ENCODE measurements at regions of chr15 and their contacts with region 1.

Region 1: GRCh38 chr15:64387562-64388168 is at the start of gene TRIP4:
- DNase-seq: peak; percentile 98 to 100
- ATAC-seq: peak; percentile 100
- H3K4me3 ChIP-seq: peak within 1 kb of the TSS; percentile 72
- H3K27ac ChIP-seq: peak within 1 kb of the TSS; percentile 83 to 87
- H3K4me1 ChIP-seq: peaks cover 9% of the 10 kb centered on the region
- CTCF ChIP-seq: 0 out of 3 replicates have a peak, but pooled peaks have one; percentile 11
- EP300 ChIP-seq: 0 out of 5 replicates have a peak, but pooled peaks of 1 of the 2 experiments have one; percentile 23
- POLR2A ChIP-seq: peak; percentile 92
- RAD21 ChIP-seq: peak; percentile 37 to 53; a peak in 3 of 5 replicates
- polyA plus RNA-seq, gene TRIP4: 30.0 and 34.9 TPM in 2 replicates

Region 2: GRCh38 chr15:64355944-64356709 is 31.5 kb before region 1 on chr15 and contains the start of gene CSNK1G1:
- CTCF ChIA-PET with region 1: interaction called, 11 read pairs
- POLR2A ChIA-PET with region 1: interaction called, 11 read pairs
- DNase-seq: peak; percentile 93 to 98
- ATAC-seq: peak; percentile 98 to 99
- H3K4me3 ChIP-seq: peak within 1 kb of the TSS; percentile 82
- H3K27ac ChIP-seq: peak within 1 kb of the TSS; percentile 90 to 94
- H3K4me1 ChIP-seq: peaks cover 13% of the 10 kb centered on the region
- CTCF ChIP-seq: peak; percentile 79
- EP300 ChIP-seq: no peak
- POLR2A ChIP-seq: peak; percentile 44; the same call in 1 of the 2 replicates
- RAD21 ChIP-seq: peak; percentile 70 to 83
- polyA plus RNA-seq, gene CSNK1G1: 31.8 and 36.3 TPM in 2 replicates

Region 3: DNA sequence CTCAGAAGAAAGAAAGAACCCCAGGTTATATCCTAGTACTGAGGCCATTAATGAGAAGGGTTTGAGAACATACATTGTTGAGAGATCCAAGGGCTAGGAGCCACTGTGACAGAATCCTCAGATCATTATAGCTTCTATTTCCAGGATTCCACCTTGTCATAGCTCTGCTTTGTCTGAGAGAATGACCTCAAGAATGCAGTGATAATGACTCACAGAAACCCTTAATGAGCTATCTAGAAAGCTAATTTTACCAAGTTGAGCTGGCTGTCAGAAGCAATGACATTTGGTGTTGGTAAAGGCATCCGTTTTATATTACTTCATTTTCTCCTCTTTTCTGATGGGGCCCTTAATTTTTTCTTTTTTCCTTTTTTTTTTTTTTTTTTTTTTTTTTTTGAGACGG is 10.9 kb after region 1 on chr15:
- CTCF ChIA-PET with region 1: interaction called, 7 read pairs
- POLR2A ChIA-PET with region 1: interaction called, 12 read pairs
- DNase-seq: no peak
- ATAC-seq: no peak
- H3K4me3 ChIP-seq: no peak overlapping the region
- H3K27ac ChIP-seq: no peak overlapping the region
- H3K4me1 ChIP-seq: no peaks in the 10 kb centered on the region
- CTCF ChIP-seq: no peak
- EP300 ChIP-seq: no peak
- POLR2A ChIP-seq: no peak
- RAD21 ChIP-seq: no peak

Region 4: DNA sequence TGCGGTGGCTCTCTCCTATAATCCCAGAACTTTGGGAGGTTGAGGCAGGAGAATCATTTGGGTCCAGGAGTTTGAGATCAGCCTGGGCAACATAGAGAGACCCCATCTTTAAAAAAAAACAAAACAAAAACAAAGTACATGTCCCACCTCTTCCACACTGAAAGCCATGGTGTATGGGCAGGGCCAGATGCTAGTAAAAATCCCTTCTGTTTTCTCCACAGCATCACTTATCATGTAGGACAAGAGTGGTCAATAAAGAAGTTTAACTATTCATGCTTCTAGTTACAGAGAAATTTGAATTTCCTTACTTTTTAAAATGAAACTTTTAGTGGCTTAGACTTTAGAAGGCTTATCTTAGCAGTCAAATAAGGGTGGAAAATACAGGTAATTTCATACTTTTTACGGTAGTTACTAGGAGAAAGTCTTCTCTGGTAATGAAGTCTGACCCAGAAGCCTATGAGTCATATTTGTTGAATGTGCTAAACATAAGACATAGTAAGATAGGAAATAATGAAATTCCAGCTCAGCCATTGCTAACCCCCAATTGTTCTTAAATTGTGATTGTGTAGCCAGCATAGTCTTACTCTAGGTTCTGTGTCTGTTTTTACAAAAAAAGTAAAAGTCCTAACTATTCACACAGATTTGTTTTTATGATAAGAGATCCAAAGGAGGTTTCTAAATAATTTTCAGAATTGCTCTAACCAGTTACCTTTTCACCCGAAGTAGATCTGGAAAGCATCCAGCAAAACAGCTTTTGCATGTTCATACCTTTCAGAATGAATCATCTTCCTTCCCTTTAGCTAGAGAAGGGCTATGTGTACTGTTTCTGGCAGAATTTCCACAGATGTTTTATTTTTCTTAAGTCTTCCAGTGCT is 56.3 kb after region 1 on chr15:
- CTCF ChIA-PET with region 1: no interaction called
- POLR2A ChIA-PET with region 1: interaction called, 10 read pairs
- DNase-seq: peak; percentile 78 to 83
- ATAC-seq: peak; percentile 91 to 92
- H3K4me3 ChIP-seq: no peak overlapping the region; the same call in 2 of the 3 replicates
- H3K27ac ChIP-seq: peak overlapping the region; percentile 78 to 82
- H3K4me1 ChIP-seq: peaks cover 23% of the 10 kb centered on the region
- CTCF ChIP-seq: no peak
- EP300 ChIP-seq: no peak
- POLR2A ChIP-seq: no peak
- RAD21 ChIP-seq: no peak